Left cardiac atrium (tissue), 4 donors: ENCODE measurements at regions of chr13 and their contacts with region 1.

Region 1: GRCh38 chr13:46553886-46554858 is 1.2 kb downstream of the LRCH1 start:
- DNase-seq: peak; percentile 70
- ATAC-seq: peak; percentile 77 to 82

Region 2: GRCh38 chr13:46232281-46232680 is 321.9 kb before region 1 on chr13:
- intact Hi-C with region 1: no loop called
- DNase-seq: no peak
- ATAC-seq: no peak

Region 3: DNA sequence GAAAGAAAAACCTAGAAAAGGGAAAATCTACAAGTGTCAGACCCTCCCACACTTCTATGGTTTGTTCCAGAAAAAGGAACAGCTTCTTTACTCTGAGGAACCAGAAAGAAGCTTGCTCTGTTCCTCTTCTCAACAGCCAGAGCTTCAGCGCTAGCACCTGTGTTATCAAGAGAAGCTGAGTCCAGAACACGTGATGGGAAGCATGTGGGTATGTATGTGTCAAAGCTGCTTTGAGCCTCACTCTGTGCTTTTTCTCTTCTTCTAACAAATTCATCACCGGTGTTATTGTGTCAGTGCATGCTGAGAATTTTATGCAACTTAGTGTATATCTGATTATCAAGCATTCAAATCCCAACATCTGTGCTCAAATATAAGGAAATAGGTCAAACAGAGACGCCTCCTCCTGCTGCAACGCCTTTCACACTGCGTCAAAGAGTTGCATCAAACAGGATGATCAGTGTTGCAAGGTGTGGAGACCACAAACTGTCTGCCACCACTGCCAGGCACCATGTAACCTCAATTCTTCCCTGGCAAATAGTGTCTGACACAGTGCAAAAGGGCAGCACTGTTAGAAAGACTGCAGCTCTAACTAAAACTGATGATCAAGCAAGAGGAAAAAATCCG is 258.6 kb before region 1 on chr13:
- intact Hi-C with region 1: no loop called
- DNase-seq: no peak
- ATAC-seq: peak; percentile 69 to 78

Region 4: DNA sequence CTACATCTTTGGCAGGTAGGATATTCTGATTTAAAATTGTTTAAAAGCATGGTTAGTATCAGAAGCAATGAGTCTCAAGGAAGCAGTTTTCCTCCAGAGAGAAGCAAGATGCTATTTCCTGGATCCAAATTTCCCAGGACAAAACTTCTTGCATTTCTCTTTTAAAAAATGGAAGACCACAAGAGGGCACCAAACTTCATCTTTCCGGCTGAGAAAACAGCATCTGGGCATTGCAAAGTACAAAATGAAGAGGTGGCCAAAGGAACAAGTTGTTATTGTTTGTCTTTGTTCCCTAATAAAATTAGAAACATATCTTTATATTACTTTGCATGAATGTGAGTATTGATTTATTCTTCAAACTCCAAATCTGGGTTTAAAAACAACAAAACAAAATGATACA is 61.2 kb before region 1 on chr13:
- intact Hi-C with region 1: loop called (anchors 2 to 5 kb)
- DNase-seq: no peak
- ATAC-seq: no peak

Region 5: GRCh38 chr13:46603165-46603603 is 49.0 kb after region 1 on chr13:
- intact Hi-C with region 1: loop called (anchors 10 kb)
- DNase-seq: no peak
- ATAC-seq: no peak

Region 6: GRCh38 chr13:46639033-46639981 is 85.1 kb after region 1 on chr13:
- intact Hi-C with region 1: no loop called
- DNase-seq: no peak
- ATAC-seq: peak in 1 of 2 donors; percentile 17

Region 7: DNA sequence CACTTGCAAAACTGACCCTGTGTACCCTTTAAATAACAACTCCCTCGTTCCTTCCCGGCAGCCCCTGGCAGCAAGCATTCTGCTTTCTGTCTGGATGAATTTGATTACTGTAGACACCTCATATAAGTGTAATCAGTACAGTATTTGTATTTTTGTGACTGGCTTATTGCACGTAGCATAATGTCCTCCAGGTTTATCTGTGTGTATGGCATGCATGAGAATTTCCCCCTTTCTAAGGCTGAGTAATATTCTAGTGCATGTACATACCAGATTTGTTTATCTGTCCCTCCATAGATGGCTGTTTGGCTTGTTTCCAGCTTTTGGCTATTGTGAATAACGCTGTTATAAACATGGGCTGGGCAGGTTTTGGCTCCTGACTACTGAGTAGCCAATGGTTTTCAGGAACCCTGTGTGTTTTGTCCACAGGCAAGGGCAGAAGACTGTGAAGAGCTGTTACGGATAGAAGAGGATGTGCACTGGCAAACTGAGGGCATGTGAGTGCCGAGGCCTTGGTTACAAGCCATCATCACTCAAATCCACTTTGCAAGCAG is 144.8 kb after region 1 on chr13:
- intact Hi-C with region 1: loop called in 1 of 2 experiments (anchors 5 kb)
- DNase-seq: no peak
- ATAC-seq: peak; percentile 59 to 64

Region 8: DNA sequence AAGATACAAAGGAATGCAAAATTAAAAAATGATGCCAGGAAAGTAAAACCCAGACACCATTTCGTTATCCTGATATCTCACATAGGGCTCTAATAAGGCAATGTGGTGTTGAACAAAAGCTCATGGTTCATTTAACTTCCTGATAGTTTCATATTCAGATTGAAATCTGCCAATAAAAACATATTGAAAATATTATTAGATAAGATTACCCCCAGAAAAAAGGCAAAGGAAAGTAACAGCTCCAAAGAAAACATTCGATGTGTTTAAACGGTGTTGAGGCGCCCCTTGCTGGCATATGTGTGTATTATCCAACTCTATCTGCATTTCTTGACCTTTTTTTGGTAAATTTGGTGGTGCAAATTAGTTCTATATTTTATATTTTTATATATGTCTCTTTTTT is 166.9 kb after region 1 on chr13:
- intact Hi-C with region 1: loop called (anchors 2 to 5 kb)
- DNase-seq: peak; percentile 54
- ATAC-seq: peak; percentile 56 to 57